Activated CD4-positive, alpha-beta memory T cell treated with anti-CD3 and anti-CD28 coated beads, Interleukin-2, amount 10 ng/mL, durations not matched to agents 7 days and 5 days (primary cell): ENCODE measurements at regions of chr2 and their contacts with region 1.

Region 1: GRCh38 chr2:191128172-191128910 is 22.5 kb downstream of the STAT4 start:
- DNase-seq: no peak
- H3K4me3 Mint-ChIP-seq: peak overlapping the region; percentile 60
- H3K27ac Mint-ChIP-seq: peak overlapping the region; percentile 71
- H3K4me1 Mint-ChIP-seq: peaks cover 59% of the 10 kb centered on the region
- H3K27me3 Mint-ChIP-seq: no peaks in the 10 kb centered on the region

Region 2: GRCh38 chr2:191114403-191114886 is 13.9 kb before region 1 on chr2:
- CTCF ChIA-PET with region 1: interaction called, 11 read pairs
- POLR2A ChIA-PET with region 1: interaction called, 48 read pairs
- DNase-seq: peak; percentile 39
- H3K4me3 Mint-ChIP-seq: peak overlapping the region; percentile 61
- H3K27ac Mint-ChIP-seq: peak overlapping the region; percentile 94
- H3K4me1 Mint-ChIP-seq: peaks cover 71% of the 10 kb centered on the region
- H3K27me3 Mint-ChIP-seq: no peaks in the 10 kb centered on the region